ENCODE measurements at regions of chr10 and their contacts with region 1.

Region 1: DNA sequence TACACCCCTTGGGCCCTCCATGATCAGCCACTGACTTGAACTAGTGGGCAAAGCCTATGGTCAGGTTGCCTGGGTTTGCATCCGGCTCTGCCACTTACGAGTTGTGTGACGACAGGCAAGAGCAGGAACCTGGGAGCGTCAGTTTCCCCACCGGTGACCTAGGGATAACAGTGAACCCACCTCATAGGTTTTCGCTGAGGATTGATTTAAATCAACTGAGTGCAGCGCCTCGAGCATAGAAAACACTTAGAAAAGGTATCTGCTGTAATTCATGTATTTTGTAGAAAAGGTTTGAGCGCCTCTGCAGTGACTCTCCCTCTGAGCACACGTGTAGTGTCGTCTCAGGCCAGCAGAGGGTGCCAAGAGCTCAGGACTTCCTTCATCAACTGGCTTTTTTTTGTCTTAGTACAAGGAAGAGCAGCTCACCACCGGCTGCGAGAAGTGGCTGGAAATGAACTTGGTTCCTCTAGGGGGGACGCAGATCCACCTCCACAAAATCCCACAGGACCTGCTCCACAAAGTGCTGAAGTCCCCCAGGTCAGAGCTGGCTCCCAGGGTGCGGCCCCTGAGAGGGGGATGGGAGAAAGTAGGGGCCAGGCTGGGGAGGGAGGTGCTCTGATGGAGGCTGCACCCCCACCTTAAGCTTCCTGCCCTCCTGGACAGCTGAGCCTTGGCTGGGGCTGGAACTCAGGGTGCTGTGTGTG is 27.7 kb downstream of the BTBD16 start:
- DNase-seq: peak; percentile 61
- H3K4me3 Mint-ChIP-seq: no peak overlapping the region
- H3K27ac Mint-ChIP-seq: no peak overlapping the region
- H3K4me1 Mint-ChIP-seq: no peaks in the 10 kb centered on the region
- H3K27me3 Mint-ChIP-seq: no peaks in the 10 kb centered on the region
- CTCF ChIP-seq: peak; percentile 68

Region 2: GRCh38 chr10:121411004-121411403 is 887.7 kb before region 1 on chr10:
- CTCF ChIA-PET with region 1: no interaction called
- intact Hi-C with region 1: no loop called
- DNase-seq: no peak
- H3K4me3 Mint-ChIP-seq: no peak overlapping the region
- H3K27ac Mint-ChIP-seq: no peak overlapping the region
- H3K4me1 Mint-ChIP-seq: peaks cover 41% of the 10 kb centered on the region
- H3K27me3 Mint-ChIP-seq: no peaks in the 10 kb centered on the region
- CTCF ChIP-seq: no peak

Region 3: GRCh38 chr10:122232769-122233168 is 66.0 kb before region 1 on chr10:
- CTCF ChIA-PET with region 1: no interaction called
- intact Hi-C with region 1: no loop called
- DNase-seq: no peak
- H3K4me3 Mint-ChIP-seq: no peak overlapping the region
- H3K27ac Mint-ChIP-seq: no peak overlapping the region
- H3K4me1 Mint-ChIP-seq: no peaks in the 10 kb centered on the region
- H3K27me3 Mint-ChIP-seq: no peaks in the 10 kb centered on the region
- CTCF ChIP-seq: no peak

Region 4: DNA sequence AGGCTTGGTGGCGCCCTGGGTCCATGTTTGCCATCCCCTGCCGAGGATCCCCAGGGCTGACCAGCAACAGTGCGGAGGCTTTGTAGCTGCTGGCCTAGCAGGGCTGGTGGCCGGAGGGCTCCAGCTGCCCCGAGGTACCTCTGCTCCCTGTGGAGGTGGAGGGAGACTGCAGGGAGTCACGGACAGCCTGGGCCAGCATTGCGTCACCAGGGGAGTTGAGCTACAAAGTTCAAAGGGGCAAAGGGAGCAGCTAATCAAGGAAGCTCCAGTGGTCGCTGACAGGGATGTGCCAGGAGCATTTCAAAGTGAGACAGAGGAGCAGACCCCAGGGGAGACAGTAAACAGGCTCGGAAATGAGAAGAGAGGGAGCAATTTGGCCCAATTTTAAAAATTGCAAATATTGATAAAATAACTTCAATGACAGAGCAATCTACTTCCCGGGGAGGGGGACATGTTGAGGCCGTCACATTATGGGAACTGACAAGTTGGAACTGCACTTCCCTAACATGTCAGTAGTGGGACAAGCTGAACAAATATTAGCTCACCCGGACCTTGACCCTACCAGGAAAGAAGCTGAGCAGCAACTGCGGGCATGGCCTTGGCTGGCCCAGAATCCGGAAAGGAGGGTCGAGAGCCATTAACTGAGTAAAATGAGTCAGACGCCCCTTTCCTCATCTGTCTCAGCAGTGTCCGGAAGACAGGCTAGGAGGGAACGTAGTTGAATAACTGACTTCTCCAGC is 11.7 kb after region 1 on chr10:
- CTCF ChIA-PET with region 1: interaction called, 11 read pairs
- intact Hi-C with region 1: no loop called
- DNase-seq: peak; percentile 63
- H3K4me3 Mint-ChIP-seq: peak overlapping the region; percentile 49
- H3K27ac Mint-ChIP-seq: peak overlapping the region; percentile 92
- H3K4me1 Mint-ChIP-seq: peaks cover 38% of the 10 kb centered on the region
- H3K27me3 Mint-ChIP-seq: no peaks in the 10 kb centered on the region
- CTCF ChIP-seq: no peak

Region 5: DNA sequence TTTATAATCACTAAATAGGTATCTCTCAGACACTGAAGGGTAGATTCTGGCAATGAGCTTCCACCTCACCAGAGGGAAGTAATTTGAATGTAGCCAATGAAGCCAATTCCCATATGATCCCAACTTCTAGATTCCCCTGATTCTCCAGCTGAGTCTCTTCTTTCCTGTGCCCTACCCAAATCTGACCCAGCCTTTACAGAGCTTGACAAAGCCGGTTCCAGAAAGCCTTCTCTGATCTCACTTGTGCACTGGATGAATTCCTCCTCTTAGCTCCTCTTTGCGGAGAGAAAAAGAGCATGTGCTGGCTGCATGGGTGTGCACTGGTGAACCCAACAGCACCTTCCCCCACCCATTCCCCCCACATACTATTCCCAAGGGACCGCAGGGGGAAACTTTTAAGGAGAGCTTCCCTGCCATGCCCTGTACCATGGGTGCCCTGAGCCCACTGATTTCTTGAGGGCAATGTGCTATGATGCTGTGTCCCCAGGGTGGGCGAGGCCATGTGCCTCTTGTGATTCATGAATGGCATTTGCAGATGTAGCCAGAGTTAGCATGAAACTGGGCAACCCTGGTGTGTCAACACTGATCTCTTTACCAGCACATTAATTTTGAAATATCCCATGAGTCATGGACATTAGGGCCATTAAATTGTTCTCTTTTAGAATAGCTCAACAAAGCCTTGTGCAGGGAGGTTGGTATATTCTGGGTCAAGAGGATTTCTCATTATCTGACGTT is 25.4 kb after region 1 on chr10:
- CTCF ChIA-PET with region 1: no interaction called
- intact Hi-C with region 1: no loop called
- DNase-seq: no peak
- H3K4me3 Mint-ChIP-seq: no peak overlapping the region
- H3K27ac Mint-ChIP-seq: no peak overlapping the region
- H3K4me1 Mint-ChIP-seq: no peaks in the 10 kb centered on the region
- H3K27me3 Mint-ChIP-seq: no peaks in the 10 kb centered on the region
- CTCF ChIP-seq: no peak

Region 6: DNA sequence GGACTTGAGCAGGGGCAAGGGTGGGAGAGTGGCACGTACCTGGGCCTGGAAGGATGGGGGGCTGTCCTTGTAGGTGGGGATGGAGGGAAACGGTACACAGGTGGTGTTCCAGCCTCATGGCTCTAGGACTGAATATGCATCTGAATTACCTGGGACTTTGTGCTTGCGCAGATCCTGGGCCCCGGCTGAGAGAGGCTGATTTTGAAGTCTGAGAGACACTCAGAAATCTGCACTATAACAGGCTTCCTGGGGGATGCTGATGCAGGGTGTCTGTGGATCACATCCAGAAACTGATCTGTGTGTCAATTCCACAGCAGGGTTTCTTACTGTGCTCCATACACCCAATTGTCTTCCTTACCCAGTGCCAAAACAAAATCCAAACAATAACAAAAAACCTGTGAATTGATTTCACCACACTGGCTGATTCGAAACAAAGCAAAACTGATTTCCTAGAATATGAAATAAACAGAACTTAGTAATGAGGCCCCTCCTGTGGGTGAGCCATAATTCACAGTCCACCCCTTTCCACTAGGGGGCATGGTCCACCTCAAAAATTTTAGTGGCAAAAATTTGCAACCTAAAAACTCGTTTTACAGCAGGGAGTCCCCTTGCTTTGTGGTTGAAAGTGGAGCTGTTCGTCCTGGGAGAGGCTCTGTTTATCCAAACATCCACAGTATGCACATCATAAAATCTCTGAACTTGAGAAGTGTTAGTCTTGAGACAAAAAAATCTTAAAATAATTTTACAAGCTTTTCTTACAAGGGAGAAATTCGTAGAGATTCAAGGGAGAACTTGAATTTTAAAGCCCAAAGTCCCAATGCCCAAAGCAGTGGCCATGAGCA is 43.8 kb after region 1 on chr10:
- CTCF ChIA-PET with region 1: interaction called, 5 read pairs
- intact Hi-C with region 1: loop called (anchors 5 kb)
- DNase-seq: peak; percentile 51
- H3K4me3 Mint-ChIP-seq: no peak overlapping the region
- H3K27ac Mint-ChIP-seq: no peak overlapping the region
- H3K4me1 Mint-ChIP-seq: peaks cover 19% of the 10 kb centered on the region
- H3K27me3 Mint-ChIP-seq: no peaks in the 10 kb centered on the region
- CTCF ChIP-seq: peak; percentile 41

Region 7: DNA sequence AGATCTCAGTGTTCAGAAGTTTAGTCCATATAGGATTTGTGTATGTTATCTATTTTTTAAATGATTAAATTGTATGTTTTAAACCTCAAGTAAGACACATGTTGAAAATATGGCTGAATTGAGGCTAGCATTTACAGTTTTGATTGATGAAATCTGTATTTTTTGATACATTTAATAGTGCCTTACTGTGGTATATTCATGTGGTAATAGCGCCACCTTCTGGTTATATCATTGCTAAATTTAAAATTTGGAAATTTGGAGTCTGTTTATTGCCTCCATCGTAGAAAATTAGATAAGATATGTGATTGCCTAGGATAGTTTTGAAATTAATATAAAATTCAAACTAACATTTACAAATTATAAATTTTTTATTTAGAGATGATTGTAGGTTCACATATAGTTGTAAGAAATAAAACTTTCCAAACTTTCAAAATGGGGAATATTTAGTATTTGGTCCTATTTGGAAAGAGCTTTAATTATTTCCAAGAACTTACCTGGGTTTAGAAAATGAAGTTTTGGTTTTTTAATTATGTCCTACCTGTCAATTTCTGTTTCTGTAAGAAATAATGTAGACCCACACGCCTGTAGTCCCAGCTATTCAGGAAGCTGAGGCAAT is 136.6 kb after region 1 on chr10:
- CTCF ChIA-PET with region 1: interaction called, 12 read pairs
- intact Hi-C with region 1: loop called (anchors 1 kb)
- DNase-seq: no peak
- H3K4me3 Mint-ChIP-seq: no peak overlapping the region
- H3K27ac Mint-ChIP-seq: no peak overlapping the region
- H3K4me1 Mint-ChIP-seq: no peaks in the 10 kb centered on the region
- H3K27me3 Mint-ChIP-seq: no peaks in the 10 kb centered on the region
- CTCF ChIP-seq: no peak

Region 8: GRCh38 chr10:122565728-122566206 is 267.0 kb after region 1 on chr10:
- CTCF ChIA-PET with region 1: interaction called, 3 read pairs
- intact Hi-C with region 1: loop called (anchors 5 kb)
- DNase-seq: peak; percentile 72
- H3K4me3 Mint-ChIP-seq: no peak overlapping the region
- H3K27ac Mint-ChIP-seq: no peak overlapping the region
- H3K4me1 Mint-ChIP-seq: peaks cover 16% of the 10 kb centered on the region
- H3K27me3 Mint-ChIP-seq: peaks cover 36% of the 10 kb centered on the region
- CTCF ChIP-seq: peak; percentile 55

Measured in Calu3 (cell line).